Vagina (tissue), 2 donors: ENCODE measurements at regions of chr1 and their contacts with region 1.

Region 1: GRCh38 chr1:16181887-16182719 is 26.2 kb upstream of the EPHA2 start:
- DNase-seq: peak in 1 of 2 donors; percentile 97
- H3K4me3 ChIP-seq: peak overlapping the region in 1 of 2 donors; percentile 16
- H3K27ac ChIP-seq: peak overlapping the region; percentile 93
- H3K4me1 ChIP-seq: peaks cover 50% of the 10 kb centered on the region
- H3K27me3 ChIP-seq: no peaks in the 10 kb centered on the region
- CTCF ChIP-seq: no peak
- POLR2A ChIP-seq: no peak

Region 2: GRCh38 chr1:16146279-16147155 is 35.6 kb before region 1 on chr1:
- intact Hi-C with region 1: loop called (anchors 5 kb)
- DNase-seq: no peak
- H3K4me3 ChIP-seq: peak overlapping the region; percentile 35 to 47
- H3K27ac ChIP-seq: peak overlapping the region; percentile 84
- H3K4me1 ChIP-seq: peaks cover 65% of the 10 kb centered on the region
- H3K27me3 ChIP-seq: no peaks in the 10 kb centered on the region
- CTCF ChIP-seq: no peak
- POLR2A ChIP-seq: no peak

Region 3: GRCh38 chr1:16206547-16207317 is 24.6 kb after region 1 on chr1:
- intact Hi-C with region 1: no loop called
- DNase-seq: peak in 1 of 2 donors; percentile 98
- H3K4me3 ChIP-seq: peak overlapping the region; percentile 54 to 68
- H3K27ac ChIP-seq: peak overlapping the region; percentile 90
- H3K4me1 ChIP-seq: peaks cover 47% of the 10 kb centered on the region
- H3K27me3 ChIP-seq: no peaks in the 10 kb centered on the region
- CTCF ChIP-seq: no peak
- POLR2A ChIP-seq: peak in 1 of 2 donors; percentile 66

Region 4: DNA sequence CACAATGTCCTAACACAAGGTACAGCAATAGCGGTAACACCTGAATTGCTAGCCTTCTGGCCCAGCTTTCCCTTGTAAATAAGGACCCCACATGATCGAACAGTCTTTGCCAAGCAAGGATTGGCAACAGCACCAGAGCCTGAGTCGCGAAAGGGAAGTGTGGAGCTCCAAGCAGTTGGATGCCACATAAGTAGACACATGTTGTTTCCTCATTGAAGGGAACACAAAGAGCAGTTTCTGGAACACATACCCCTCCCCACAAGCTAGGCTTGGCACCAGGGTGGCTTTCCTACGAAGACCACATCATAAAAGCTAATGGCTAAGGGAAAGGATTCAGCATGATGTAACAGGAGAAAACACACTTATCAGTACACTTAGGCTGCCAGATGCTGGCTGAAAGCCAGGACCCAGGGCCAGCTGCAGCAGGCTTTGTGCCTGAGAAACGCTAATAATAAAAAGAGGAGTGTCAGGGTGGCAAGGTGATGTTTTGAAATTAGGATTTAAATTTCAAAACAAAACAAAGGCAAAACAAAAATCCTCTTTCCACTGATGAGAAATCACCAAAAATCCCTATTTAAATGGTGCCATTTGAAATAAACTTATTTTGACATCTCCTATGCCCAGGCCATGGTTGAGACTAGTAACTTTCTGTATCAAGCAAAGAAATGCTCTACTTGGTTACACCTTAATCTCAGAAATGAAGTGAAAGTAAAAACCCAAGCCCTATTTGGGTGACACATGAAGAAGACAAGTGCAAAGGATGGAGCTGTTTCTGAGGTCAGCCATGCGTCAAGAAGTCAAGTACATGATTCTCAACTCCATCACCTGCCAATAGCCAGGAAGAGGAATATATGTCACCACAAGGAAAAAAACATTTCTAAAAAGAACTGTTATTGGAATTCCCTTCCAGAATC is 66.8 kb after region 1 on chr1:
- intact Hi-C with region 1: loop called (anchors 5 kb)
- DNase-seq: peak in 1 of 2 donors; percentile 94
- H3K4me3 ChIP-seq: no peak overlapping the region
- H3K27ac ChIP-seq: peak overlapping the region; percentile 87
- H3K4me1 ChIP-seq: peaks cover 55% of the 10 kb centered on the region
- H3K27me3 ChIP-seq: no peaks in the 10 kb centered on the region
- CTCF ChIP-seq: no peak
- POLR2A ChIP-seq: no peak